Right cardiac atrium (tissue), 5 donors: ENCODE measurements at regions of chr15 and their contacts with region 1.

Region 1: DNA sequence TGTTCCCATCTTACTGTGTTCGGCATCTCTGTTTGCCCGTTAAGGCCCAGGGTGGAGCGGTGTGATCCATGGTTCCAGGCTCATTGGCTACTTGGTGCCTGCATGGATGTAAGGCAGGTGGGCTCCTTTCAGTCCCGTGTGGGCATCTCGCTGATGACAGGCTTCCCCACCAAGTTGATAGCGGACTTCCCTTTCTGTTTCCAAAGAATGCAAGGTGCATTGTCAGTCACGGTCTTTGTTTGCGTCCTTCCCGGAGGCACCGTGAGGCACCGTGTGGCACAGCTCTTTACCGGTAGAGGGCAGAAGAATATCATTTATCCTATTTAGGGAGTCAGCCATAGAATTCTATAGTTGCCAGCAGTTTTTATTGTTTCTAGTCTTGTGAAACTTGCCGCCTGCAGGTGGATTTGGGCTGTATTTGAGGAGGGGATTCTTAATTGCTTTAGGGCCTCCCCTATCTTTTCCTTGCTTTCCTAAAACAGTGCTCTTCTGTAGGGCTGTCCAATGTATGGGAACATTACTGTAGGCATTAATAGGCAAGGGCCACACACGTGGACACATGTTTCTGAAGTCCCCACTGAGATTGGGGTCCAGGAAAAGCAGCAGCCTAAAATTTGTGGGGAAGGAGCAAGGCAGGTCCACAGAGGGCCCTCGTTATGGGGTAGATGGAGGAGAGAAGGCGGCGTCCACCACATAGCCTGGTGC is 244.1 kb downstream of the SLCO3A1 start:
- DNase-seq: no peak
- ATAC-seq: peak; percentile 71 to 76
- H3K4me3 ChIP-seq: no peak overlapping the region
- H3K27ac ChIP-seq: no peak overlapping the region
- H3K4me1 ChIP-seq: peaks cover 2% of the 10 kb centered on the region
- H3K27me3 ChIP-seq: no peaks in the 10 kb centered on the region

Region 2: DNA sequence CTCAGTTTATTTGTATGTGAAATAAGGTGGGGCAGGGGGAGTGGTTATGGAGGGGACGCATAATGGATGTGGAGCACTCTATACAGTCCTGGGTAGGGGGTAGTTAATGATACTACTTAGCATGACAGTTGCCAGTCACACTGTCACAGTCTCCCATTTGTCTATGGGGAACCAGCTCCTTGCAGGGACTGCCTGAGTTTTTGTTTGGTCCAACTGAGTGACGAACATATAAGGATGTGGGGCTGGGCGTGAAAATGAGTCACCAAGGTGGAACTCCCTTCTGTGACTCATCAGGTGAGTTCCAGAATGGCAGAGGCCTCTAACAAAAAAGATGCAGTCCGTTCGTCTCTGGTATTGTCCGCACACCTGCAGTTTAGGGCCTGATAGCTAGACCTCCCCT is 60.8 kb after region 1 on chr15:
- intact Hi-C with region 1: loop called in 1 of 4 experiments (anchors 10 kb)
- DNase-seq: no peak
- ATAC-seq: peak in 1 of 2 donors; percentile 13
- H3K4me3 ChIP-seq: no peak overlapping the region
- H3K27ac ChIP-seq: no peak overlapping the region
- H3K4me1 ChIP-seq: no peaks in the 10 kb centered on the region
- H3K27me3 ChIP-seq: no peaks in the 10 kb centered on the region

Region 3: GRCh38 chr15:92226014-92226612 is 128.5 kb after region 1 on chr15:
- intact Hi-C with region 1: loop called (anchors 5 kb)
- DNase-seq: no peak
- ATAC-seq: peak; percentile 64 to 74
- H3K4me3 ChIP-seq: no peak overlapping the region
- H3K27ac ChIP-seq: no peak overlapping the region
- H3K4me1 ChIP-seq: no peaks in the 10 kb centered on the region
- H3K27me3 ChIP-seq: no peaks in the 10 kb centered on the region

Region 4: DNA sequence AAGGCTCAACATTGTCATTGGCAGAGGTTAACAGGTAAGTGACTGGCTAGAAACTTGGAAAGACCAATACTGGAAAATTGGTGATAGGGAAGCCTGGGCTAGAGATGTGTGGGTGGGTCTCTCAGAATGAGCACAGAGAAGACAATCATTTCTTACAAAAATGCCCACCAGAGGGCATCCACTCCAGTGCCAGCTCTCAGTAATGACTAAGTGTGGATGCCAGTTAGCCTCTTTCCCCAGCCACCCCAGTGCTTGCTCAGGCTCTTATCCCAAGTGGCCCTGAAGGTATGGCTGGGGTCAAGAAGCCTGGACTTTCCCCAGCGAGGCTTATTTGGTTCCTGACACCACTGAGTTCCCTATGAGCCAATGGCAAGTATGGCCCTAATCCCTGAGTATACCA is 180.2 kb after region 1 on chr15:
- intact Hi-C with region 1: no loop called
- DNase-seq: no peak
- ATAC-seq: peak; percentile 45 to 54
- H3K4me3 ChIP-seq: no peak overlapping the region
- H3K27ac ChIP-seq: no peak overlapping the region
- H3K4me1 ChIP-seq: no peaks in the 10 kb centered on the region
- H3K27me3 ChIP-seq: no peaks in the 10 kb centered on the region

Region 5: GRCh38 chr15:92383519-92384326 is 286.1 kb after region 1 on chr15:
- intact Hi-C with region 1: loop called in 1 of 4 experiments (anchors 10 kb)
- DNase-seq: peak in 2 of 3 donors; percentile 60 to 67
- ATAC-seq: no peak
- H3K4me3 ChIP-seq: no peak overlapping the region
- H3K27ac ChIP-seq: no peak overlapping the region
- H3K4me1 ChIP-seq: no peaks in the 10 kb centered on the region
- H3K27me3 ChIP-seq: no peaks in the 10 kb centered on the region